GM18951 (cell line): ENCODE measurements at regions of chr9 and their contacts with region 1.

Region 1: DNA sequence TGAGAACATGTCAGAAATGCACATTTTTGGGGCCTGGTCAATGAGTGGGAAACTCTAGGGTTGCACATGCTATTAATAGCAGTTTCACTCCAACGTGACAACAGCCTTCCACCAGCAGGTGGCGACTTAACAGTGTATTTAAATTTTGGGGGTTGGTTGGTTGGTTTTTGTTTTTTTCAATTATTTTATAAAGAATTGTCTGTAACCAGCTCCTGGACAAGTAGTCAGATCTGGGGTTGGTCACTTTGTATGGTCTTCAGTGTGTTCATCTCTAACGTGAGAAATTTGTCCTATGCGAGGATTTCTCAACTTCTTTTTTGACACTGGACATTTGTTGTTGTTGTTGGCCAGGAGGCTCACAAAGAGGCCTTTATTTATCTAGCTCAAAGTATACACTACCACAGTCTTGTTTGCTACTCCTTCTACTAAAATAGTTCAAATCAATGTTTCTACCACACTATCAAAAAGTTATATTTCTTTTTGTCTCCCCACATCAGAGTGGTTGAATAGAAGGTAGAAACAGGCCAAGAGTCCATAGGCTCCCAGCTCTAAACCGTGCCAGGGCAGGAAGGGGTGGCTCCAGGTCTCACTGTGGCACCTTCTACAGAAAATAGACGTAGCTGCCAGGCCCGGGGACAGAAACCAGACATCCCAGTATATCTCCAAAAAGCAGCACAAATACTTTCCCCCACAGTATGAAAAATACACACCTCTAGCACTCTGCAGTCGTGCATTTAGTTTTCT is 110.4 kb downstream of the TRPM6 start:
- POLR2A ChIP-seq: no peak

Region 2: GRCh38 chr9:74293479-74293878 is 483.8 kb before region 1 on chr9:
- in situ Hi-C with region 1: no loop called
- POLR2A ChIP-seq: no peak

Region 3: GRCh38 chr9:74729136-74729695 is 48.1 kb before region 1 on chr9:
- in situ Hi-C with region 1: no loop called
- POLR2A ChIP-seq: no peak

Region 4: DNA sequence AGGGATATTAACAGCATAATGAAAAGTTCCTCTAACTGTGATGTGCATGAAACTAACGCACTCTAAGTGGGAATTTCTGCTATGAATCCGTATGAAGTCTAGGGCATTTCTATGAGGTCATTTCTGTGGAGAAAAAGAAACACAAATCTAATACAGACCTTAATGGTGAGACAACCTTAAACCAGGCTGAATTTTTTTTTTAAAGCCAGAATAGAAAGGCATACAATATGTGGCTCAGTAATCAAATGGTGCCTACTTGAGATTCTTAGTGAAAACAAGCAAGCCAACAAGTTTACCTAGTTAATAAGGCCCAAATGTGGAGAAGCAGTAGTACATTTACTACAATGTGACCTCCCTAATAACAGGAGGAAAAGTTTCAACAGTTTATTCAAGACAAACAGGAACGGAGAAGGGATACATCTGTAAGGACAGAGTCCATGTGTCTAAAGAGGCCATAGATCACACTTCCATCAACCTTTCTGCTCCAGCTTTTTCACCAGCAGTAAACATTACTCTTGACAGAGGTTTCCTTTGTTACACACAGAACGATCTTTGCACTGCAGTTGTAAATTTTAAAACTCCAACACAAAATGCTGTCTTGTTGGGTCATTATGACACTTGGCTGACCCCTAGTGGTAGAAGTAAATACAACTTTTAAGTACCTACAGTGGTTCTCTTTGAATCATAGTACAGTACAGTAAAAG is 224.6 kb after region 1 on chr9:
- in situ Hi-C with region 1: loop called (anchors 5 kb)
- POLR2A ChIP-seq: no peak

Region 5: DNA sequence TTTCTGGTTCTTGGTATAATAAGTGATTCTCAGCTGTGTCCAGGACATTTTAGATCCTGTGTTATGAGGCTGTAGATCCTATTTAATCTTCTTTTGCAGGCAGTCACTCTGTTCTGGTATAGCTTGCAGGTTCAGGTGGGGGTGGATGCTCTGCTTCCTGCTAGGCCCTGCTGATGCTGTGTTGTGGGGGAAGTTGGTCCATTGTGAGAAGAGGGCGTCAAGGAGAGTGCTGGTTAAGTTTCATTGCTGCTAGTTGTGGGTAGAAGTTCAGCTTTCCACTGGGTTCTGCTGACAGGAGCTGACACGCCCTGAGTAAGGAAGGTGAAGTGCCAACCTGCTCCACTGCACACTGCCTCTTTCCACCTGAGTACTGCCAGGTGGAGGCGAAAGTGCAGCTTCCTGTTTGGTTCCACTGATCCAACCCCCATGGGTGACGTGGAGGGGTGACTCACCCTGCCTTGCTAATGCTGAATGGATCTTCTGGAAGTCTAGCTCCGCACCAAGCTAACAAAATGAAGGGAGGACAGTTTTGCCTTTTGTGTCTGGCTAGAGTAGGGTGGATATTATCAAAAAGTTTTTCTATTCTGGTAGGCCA is 294.3 kb after region 1 on chr9:
- in situ Hi-C with region 1: loop called (anchors 5 kb)
- POLR2A ChIP-seq: no peak